ENCODE measurements at regions of chr6 and their contacts with region 1.

Region 1: DNA sequence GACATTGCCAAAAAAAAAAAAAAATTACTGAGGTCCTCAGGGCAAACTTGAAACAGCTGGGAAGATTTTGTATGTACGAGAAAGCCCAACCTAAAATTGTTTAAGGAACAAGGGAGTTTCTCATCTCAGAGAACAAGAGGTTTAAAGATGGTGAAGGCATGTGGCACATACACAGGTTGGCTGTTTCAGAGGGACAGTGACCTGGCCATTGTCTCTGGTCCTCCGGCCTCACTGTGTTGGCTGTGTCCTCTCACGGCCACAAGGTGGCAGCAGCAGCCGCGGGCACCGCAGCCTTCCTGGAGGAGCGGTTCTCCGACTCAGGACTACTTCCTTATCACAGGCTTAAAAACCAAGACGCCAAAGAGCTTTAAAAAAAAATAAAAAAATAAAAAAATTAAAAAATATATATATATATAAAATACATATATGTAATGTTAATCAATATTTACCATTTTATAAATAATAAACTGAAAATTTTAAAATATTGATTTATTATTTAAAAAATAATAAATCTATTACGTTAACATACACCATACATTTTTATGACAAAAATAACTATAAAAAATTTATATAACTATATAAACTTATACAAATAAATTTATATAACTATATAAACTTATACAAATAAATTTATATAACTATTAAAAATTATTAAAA is 52.8 kb downstream of the GTF2H5 start:
- H3K4me3 ChIP-seq: no peak overlapping the region
- H3K27ac ChIP-seq: no peak overlapping the region
- H3K4me1 ChIP-seq: peaks cover 3% of the 10 kb centered on the region; the same call in 1 of the 2 replicates
- CTCF ChIP-seq: peak; percentile 82

Region 2: DNA sequence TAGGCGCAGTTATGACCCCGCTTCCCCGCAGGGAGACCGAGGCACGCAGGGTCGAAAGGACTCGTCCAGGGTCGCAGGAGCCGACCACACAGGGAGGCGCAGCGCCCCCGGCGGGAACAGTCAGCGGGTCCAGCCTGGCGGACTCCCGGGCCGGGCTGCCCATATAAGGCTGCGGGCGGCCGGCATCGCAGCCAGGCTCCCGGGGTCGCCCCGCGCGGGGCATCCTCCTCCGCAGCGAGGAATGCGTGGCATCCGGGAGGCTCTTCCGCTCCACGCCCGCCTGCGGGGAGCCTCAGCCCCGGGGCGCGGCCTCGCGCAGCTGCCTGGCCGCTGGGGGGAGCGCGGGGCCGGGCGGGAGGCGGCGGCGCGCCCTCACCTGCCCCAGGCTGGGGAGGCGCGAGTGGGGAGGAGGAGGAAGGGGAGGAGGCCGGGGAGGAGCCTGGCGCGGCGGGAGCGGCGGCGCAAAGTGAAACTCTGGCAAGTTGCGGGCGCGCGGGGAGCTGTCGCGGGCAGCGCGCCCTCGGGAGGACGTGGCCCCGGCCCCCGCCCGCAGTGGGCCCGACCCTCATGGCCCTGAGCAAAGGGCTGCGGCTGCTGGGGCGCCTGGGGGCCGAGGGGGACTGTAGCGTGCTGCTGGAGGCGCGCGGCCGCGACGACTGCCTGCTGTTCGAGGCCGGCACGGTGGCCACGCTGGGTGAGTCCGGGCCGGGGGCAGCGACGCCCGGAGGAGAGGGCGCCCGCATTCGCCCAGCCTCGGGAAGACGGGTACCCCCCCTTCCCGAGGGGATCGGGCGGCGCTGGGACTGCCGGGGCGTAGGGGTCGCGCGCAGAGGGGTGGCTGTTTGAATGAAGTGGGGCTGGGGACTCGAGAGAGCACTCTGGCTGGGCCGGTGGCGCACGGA is 239.3 kb before region 1 on chr6 and contains the start of gene SYNJ2:
- CTCF ChIA-PET with region 1: no interaction called
- POLR2A ChIA-PET with region 1: no interaction called
- H3K4me3 ChIP-seq: peak within 1 kb of the TSS; percentile 71
- H3K27ac ChIP-seq: peak within 1 kb of the TSS; percentile 81; the same call in 1 of the 2 replicates
- H3K4me1 ChIP-seq: peaks cover 12% of the 10 kb centered on the region
- CTCF ChIP-seq: 0 out of 2 replicates have a peak, but pooled peaks have one; percentile 39

Region 3: GRCh38 chr6:158026054-158026900 is 194.6 kb before region 1 on chr6:
- CTCF ChIA-PET with region 1: no interaction called
- POLR2A ChIA-PET with region 1: no interaction called
- H3K4me3 ChIP-seq: peak overlapping the region; percentile 18
- H3K27ac ChIP-seq: peak overlapping the region; percentile 45; the same call in 1 of the 2 replicates
- H3K4me1 ChIP-seq: peaks cover 16% of the 10 kb centered on the region
- CTCF ChIP-seq: peak; percentile 92

Region 4: DNA sequence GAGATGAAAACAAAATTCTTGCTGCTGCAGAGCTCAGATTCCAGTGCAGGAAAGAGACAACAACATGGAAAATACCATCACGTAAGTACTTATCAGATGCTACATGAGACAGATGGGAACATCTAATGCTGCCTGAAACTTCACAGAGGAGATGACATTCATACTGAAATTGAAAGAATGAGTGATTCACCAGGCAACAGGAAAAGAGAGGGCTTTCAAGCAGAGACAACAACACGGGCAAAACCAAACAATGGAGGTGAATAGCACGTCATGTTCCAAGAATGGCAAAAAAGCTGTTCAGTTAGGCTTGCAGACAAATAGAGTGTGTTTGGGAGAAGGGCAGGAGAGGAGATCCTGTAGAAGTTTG is 13.5 kb before region 1 on chr6:
- CTCF ChIA-PET with region 1: interaction called, 20 read pairs
- POLR2A ChIA-PET with region 1: no interaction called
- H3K4me3 ChIP-seq: no peak overlapping the region
- H3K27ac ChIP-seq: no peak overlapping the region
- H3K4me1 ChIP-seq: no peaks in the 10 kb centered on the region
- CTCF ChIP-seq: no peak

Region 5: DNA sequence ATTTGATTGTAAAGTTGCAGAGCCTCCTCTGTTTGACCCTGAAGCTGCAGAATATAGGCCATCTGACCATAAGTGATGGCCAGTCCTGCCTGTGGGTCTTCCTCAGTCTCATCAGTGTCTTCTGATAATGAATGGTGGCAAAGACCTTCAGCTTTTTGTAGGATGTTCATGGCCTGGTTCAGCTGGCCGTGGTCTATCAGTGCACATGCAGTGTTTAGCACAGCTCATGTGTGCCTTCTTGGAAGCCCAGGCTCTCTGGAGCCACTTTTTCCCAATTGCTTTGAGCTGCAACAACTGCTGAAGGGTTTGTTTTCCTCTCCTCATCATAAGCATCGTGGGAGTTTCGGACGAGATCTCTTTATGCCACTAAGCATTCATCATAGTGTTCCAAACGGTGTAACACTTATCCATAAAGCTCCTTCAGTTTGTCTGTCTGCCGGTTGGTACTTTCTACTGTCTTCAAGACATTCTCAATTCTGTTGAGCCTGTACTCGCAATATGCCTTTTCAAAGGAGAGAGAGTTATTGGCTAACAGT is 21.2 kb after region 1 on chr6:
- CTCF ChIA-PET with region 1: interaction called, 13 read pairs
- POLR2A ChIA-PET with region 1: no interaction called
- H3K4me3 ChIP-seq: no peak overlapping the region
- H3K27ac ChIP-seq: peak overlapping the region; percentile 5; the same call in 1 of the 2 replicates
- H3K4me1 ChIP-seq: peaks cover 5% of the 10 kb centered on the region
- CTCF ChIP-seq: no peak

Region 6: GRCh38 chr6:158518191-158519127 is 297.5 kb after region 1 on chr6:
- CTCF ChIA-PET with region 1: interaction called, 21 read pairs
- POLR2A ChIA-PET with region 1: no interaction called
- H3K4me3 ChIP-seq: peak overlapping the region; percentile 35
- H3K27ac ChIP-seq: no peak overlapping the region; the same call in 1 of the 2 replicates
- H3K4me1 ChIP-seq: 0 out of 2 replicates have a peak, but pooled peaks cover 4% of the 10 kb centered on the region
- CTCF ChIP-seq: 0 out of 2 replicates have a peak, but pooled peaks have one; percentile 33

Region 7: DNA sequence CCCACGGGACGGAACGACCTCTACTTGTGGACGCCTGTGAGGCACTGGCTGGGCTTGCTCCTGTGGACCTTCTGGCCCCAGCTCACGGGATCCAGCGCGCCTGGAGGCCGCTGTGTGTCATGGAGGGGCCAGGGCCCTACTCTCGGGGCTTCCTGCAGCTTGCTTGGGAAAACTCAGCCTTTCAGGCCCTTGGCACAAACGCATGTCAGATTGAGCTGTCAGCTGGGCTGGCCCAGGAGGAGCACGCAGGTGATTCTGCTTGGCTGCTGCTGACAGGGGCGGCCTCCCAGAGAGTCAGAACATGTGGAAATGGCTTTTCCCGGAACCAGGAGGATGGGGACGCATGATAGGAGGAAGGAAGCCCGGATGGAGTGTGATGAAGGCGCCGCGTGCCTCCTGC is 378.7 kb after region 1 on chr6:
- CTCF ChIA-PET with region 1: interaction called, 32 read pairs
- POLR2A ChIA-PET with region 1: no interaction called
- H3K4me3 ChIP-seq: no peak overlapping the region
- H3K27ac ChIP-seq: no peak overlapping the region
- H3K4me1 ChIP-seq: no peaks in the 10 kb centered on the region
- CTCF ChIP-seq: no peak

Region 8: GRCh38 chr6:158627168-158628158 is 406.5 kb after region 1 on chr6:
- CTCF ChIA-PET with region 1: interaction called, 10 read pairs
- POLR2A ChIA-PET with region 1: no interaction called
- H3K4me3 ChIP-seq: no peak overlapping the region
- H3K27ac ChIP-seq: no peak overlapping the region
- H3K4me1 ChIP-seq: no peaks in the 10 kb centered on the region
- CTCF ChIP-seq: no peak

Region 9: DNA sequence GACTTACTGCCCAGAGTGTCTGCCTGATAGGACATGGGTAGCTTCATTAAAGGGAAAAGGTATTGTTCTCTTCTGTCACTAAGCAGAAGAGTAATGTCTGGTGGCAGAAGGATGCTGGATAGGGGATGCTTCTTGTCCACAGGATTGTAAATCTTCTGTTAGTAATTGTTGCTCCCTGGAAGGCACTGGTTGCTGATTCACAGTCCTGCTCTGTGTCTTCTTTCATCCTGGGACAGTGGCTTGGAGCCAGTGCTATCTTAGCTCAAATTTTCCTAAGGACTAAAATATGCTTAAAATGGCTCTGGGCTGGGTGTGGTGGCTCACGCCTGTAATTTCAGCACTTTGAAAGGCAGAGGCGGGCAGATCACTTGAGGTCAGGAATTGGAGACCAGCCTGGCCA is 476.9 kb after region 1 on chr6:
- CTCF ChIA-PET with region 1: interaction called, 13 read pairs
- POLR2A ChIA-PET with region 1: no interaction called
- H3K4me3 ChIP-seq: no peak overlapping the region
- H3K27ac ChIP-seq: no peak overlapping the region
- H3K4me1 ChIP-seq: no peaks in the 10 kb centered on the region
- CTCF ChIP-seq: no peak